Activated CD4-positive, alpha-beta memory T cell treated with anti-CD3 and anti-CD28 coated beads, Interleukin-2, amount 10 ng/mL, durations not matched to agents 7 days and 5 days (primary cell): ENCODE measurements at regions of chr10 and their contacts with region 1.

Region 1: GRCh38 chr10:102140184-102140583 is 7.3 kb downstream of the PPRC1 start:
- DNase-seq: no peak
- H3K4me3 Mint-ChIP-seq: no peak overlapping the region
- H3K27ac Mint-ChIP-seq: no peak overlapping the region
- H3K4me1 Mint-ChIP-seq: peaks cover 23% of the 10 kb centered on the region
- H3K27me3 Mint-ChIP-seq: no peaks in the 10 kb centered on the region

Region 2: DNA sequence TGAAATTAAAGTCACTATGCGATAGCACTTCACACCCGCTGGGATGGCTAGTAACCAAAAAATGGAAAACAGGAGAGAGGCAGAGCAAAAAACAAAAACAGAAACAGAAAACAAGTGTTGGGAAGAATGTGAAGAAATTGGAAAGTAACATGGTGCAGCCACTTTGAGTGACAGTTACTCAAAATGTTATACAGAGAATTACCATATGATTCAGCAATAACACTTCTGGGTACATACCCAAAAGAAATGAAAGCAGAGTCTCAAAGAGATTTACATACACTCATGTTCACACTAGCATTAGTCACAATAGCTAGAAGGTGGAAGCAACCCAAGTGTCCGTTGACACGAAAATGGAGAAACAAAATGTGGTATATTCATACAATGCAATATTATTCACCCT is 208.0 kb before region 1 on chr10:
- CTCF ChIA-PET with region 1: no interaction called
- POLR2A ChIA-PET with region 1: no interaction called
- DNase-seq: no peak
- H3K4me3 Mint-ChIP-seq: no peak overlapping the region
- H3K27ac Mint-ChIP-seq: no peak overlapping the region
- H3K4me1 Mint-ChIP-seq: peaks cover 7% of the 10 kb centered on the region
- H3K27me3 Mint-ChIP-seq: no peaks in the 10 kb centered on the region

Region 3: DNA sequence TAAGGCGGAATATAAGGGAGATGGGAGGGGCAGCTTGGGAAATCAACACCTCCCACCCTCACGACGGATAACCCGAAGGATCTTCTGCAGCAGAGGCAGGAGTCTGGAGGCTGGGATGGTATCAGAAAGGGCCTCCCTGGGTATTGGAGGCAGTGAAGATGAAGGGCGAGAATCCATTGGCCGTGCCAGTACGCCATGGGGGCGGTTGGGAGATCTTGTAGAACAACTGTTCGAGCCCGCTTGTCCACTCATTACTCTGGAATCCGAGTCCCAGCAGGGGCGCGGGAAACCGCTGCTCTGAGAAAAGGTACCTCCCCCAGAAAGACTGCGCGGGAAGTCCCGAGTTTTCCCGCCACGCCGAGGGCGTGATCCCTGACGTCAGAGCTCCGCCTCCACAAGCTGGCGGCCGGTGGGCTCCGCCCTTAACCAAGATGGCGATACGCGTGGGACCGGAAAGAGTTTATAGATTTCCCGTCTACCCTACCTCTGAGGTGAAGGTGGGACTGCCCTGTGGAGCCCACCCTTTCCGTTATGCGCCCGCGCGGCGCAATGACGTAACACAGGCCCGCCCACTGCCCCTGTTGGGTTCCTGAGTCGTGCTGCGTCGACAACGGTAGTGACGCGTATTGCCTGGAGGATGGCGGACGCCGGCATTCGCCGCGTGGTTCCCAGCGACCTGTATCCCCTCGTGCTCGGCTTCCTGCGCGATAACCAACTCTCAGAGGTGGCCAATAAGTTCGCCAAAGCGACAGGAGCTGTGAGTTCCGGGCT is 11.8 kb after region 1 on chr10 and contains the start of gene NOLC1:
- CTCF ChIA-PET with region 1: interaction called, 16 read pairs
- POLR2A ChIA-PET with region 1: interaction called, 34 read pairs
- DNase-seq: peak; percentile 100
- H3K4me3 Mint-ChIP-seq: peak within 1 kb of the TSS; percentile 90
- H3K27ac Mint-ChIP-seq: peak within 1 kb of the TSS; percentile 87
- H3K4me1 Mint-ChIP-seq: peaks cover 55% of the 10 kb centered on the region
- H3K27me3 Mint-ChIP-seq: no peaks in the 10 kb centered on the region
- total RNA-seq, gene NOLC1: 57.0 to 64.3 TPM

Region 4: DNA sequence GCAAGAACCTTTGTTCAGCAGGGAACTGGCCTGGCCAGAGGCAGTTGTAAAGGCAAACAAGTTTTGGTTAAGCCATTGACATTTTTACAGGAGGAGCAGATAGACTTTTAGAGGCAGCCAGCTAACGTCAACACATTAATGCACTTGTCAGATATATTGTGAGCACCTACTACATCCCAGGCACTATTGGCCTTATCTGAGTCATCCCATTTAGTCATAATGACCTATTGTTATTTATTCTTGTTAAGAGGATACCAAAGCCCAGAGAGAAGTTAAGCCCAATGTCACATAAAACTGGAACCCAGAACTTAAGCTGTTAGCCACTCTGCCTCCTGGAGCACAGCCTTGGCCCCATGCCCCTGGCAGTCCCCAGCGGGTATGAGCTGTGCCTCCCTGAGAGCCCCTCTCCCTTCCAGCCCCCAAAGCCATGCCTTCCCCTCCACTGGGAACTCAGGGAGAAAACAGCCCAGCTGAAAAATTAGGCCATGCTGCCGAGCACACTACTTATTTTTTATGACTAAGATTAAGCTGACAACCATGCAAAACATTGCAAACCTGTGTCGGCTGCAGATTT is 471.4 kb after region 1 on chr10:
- CTCF ChIA-PET with region 1: no interaction called
- POLR2A ChIA-PET with region 1: no interaction called
- DNase-seq: no peak
- H3K4me3 Mint-ChIP-seq: no peak overlapping the region
- H3K27ac Mint-ChIP-seq: no peak overlapping the region
- H3K4me1 Mint-ChIP-seq: peaks cover 34% of the 10 kb centered on the region
- H3K27me3 Mint-ChIP-seq: no peaks in the 10 kb centered on the region